ENCODE measurements at regions of chr10 and their contacts with region 1.

Region 1: GRCh38 chr10:88114368-88114767 is 250.9 kb downstream of the PTEN start:
- DNase-seq: peak; percentile 90
- H3K4me3 ChIP-seq: peak overlapping the region; percentile 33
- H3K27ac ChIP-seq: peak overlapping the region; percentile 83
- H3K4me1 ChIP-seq: peaks cover 98% of the 10 kb centered on the region
- CTCF ChIP-seq: peak; percentile 89

Region 2: DNA sequence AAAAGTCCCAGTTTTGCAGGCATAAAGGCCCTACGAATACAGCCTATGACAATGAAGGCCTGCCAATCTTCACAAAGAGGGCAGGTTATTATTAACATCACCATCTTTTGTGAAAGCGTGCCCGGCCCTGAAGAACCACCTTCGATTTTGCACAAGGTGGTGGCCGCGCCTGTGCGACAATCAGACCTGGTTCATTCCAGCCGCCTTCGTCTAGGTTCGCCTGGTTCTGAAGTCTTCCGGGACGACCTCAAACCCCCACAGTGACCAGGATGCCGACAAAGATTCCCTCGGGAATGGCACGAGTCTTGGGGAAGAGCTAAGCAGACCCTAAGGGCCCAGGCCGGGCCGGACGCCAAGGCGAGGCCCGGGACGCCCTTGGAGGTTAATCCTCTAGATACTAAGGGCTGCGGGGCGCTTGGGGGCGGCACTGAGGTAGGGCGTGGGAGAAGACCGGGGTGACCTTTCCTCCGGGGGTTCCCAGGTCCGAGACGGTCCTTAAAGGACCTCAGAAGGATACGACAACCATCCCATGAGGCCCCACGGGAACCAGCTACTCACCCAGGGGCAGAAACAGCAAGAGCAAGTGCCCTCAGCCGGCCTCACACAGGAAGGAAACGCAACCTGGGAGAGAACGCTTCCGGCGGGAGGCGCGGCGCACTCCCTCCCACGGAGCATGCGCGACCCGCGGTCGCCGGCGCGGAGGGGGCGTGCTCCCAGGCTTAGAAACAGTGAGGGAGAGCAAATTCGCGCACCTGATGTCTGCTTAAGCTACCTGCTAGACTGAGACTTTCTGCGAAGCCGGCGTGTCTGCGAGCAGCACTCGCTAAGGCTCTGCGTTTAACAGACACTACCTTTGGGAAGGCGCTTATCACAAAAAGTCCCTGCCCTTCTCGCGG is 296.5 kb before region 1 on chr10 and contains the start of gene ATAD1:
- CTCF ChIA-PET with region 1: no interaction called
- POLR2A ChIA-PET with region 1: interaction called, 6 read pairs
- intact Hi-C with region 1: loop called (anchors 5 kb)
- DNase-seq: peak; percentile 93
- H3K4me3 ChIP-seq: peak within 1 kb of the TSS; percentile 86
- H3K27ac ChIP-seq: peak within 1 kb of the TSS; percentile 79
- H3K4me1 ChIP-seq: peaks cover 28% of the 10 kb centered on the region
- CTCF ChIP-seq: peak; percentile 28; the same call in 1 of the 2 replicates
- total RNA-seq, gene ATAD1: 17.7 and 19.6 TPM in 2 replicates

Region 3: GRCh38 chr10:87976101-87976743 is 138.1 kb before region 1 on chr10:
- CTCF ChIA-PET with region 1: no interaction called
- POLR2A ChIA-PET with region 1: interaction called, 3 read pairs
- intact Hi-C with region 1: loop called (anchors 5 kb)
- DNase-seq: no peak
- H3K4me3 ChIP-seq: no peak overlapping the region
- H3K27ac ChIP-seq: no peak overlapping the region
- H3K4me1 ChIP-seq: peaks cover 6% of the 10 kb centered on the region
- CTCF ChIP-seq: no peak

Region 4: GRCh38 chr10:88080213-88080612 is 34.2 kb before region 1 on chr10:
- CTCF ChIA-PET with region 1: no interaction called
- POLR2A ChIA-PET with region 1: interaction called, 19 read pairs
- intact Hi-C with region 1: loop called (anchors 1 kb)
- DNase-seq: peak; percentile 44
- H3K4me3 ChIP-seq: peak overlapping the region; percentile 26
- H3K27ac ChIP-seq: peak overlapping the region; percentile 13
- H3K4me1 ChIP-seq: peaks cover 67% of the 10 kb centered on the region
- CTCF ChIP-seq: no peak

Region 5: GRCh38 chr10:88125766-88126165 is 11.4 kb after region 1 on chr10:
- CTCF ChIA-PET with region 1: no interaction called
- POLR2A ChIA-PET with region 1: interaction called, 12 read pairs
- intact Hi-C with region 1: no loop called
- DNase-seq: no peak
- H3K4me3 ChIP-seq: no peak overlapping the region
- H3K27ac ChIP-seq: no peak overlapping the region
- H3K4me1 ChIP-seq: peaks cover 28% of the 10 kb centered on the region
- CTCF ChIP-seq: no peak

Region 6: DNA sequence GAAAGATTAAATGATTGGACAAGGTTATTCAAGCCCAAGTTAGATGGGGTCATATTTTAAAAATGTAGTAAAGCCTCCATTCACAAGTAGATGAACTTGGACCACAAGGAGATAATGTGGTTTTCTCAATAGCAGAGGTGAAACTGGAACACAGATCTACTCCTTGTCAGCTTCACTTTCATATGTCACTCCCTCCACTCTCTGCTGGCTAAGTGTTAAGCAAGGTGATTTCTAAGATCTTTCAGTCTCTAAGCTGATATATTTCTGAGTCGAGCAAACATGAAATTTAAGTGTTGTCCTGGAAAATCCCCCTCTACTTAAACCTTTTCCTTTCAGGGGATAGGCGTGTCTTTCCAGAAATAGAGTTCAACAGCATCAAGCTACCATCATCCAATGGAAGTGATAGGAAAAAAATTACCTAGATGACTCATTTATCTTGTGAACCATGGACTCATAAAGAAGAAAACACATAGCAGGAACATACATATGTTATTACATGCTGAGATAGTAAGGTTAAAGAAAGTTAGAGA is 24.0 kb after region 1 on chr10:
- CTCF ChIA-PET with region 1: no interaction called
- POLR2A ChIA-PET with region 1: no interaction called
- intact Hi-C with region 1: no loop called
- DNase-seq: no peak
- H3K4me3 ChIP-seq: no peak overlapping the region
- H3K27ac ChIP-seq: no peak overlapping the region
- H3K4me1 ChIP-seq: no peaks in the 10 kb centered on the region
- CTCF ChIP-seq: no peak

Measured in OCI-LY7 (cell line).